T-cell (primary cell): ENCODE measurements at regions of chr17 and their contacts with region 1.

Region 1: DNA sequence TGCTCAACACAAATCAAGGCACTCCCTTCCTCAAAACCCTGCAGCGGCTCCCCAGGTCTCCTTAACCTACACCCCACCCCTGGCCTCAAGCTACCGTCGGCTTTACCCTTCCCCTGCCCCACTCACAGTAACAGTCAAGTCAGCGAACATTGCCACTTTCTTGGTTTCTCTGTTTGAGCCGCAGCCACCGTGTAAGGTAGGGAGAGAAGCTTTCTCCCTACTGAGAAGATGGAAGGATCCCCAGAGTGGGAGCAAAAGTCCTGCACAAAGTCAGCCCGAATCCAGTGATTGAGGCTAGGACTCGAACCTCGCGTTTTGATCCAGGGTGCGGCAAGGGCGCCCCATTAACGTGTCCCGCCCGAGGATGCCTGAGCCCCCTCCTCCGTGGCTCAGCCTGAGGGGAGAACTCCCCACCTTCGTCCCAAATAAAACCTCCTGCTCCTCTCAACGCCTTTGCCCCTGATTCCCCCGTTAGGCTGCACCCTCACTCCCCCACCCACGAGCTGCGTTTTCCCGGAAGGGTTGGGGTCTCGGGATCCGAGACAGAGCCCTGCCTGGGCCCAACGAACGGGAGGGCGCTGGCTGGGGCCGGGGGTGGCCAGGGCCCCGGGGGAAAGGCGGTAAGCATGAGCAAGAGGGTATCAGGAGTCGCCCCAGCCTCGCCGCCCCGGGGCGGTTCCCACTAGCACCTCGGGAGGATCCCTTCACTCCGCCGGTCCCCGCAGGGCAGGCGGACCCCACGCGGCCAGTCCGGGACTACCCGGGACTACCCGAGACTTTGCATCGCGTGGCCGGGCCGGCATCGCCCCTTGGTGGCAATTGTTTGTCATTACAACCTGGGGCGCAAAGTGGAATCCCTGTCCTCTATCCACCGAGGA is 9.9 kb upstream of the NAGS start:
- DNase-seq: peak; percentile 22 to 78 (median 55)
- ATAC-seq: peak; percentile 52 to 94 (median 89)
- H3K4me3 ChIP-seq: peak overlapping the region in 1 of 2 donors; percentile 26
- H3K4me3 Mint-ChIP-seq: peak overlapping the region in 1 of 3 donors; percentile 13
- H3K27ac ChIP-seq: no peak overlapping the region
- H3K27ac Mint-ChIP-seq: no peak overlapping the region
- H3K4me1 ChIP-seq: peaks cover 0 to 9% of the 10 kb centered on the region in 2 experiments
- H3K4me1 Mint-ChIP-seq: peaks cover 0 to 8% (median 0%) of the 10 kb centered on the region in 3 donors
- H3K27me3 ChIP-seq: peaks cover 0 to 48% of the 10 kb centered on the region in 2 experiments
- H3K27me3 Mint-ChIP-seq: peaks cover 7 to 19% of the 10 kb centered on the region in 2 donors

Region 2: GRCh38 chr17:43854453-43854852 is 140.1 kb before region 1 on chr17:
- CTCF ChIA-PET with region 1: no interaction called
- POLR2A ChIA-PET with region 1: no interaction called
- DNase-seq: no peak
- ATAC-seq: no peak
- H3K4me3 ChIP-seq: no peak overlapping the region
- H3K4me3 Mint-ChIP-seq: no peak overlapping the region
- H3K27ac ChIP-seq: no peak overlapping the region
- H3K27ac Mint-ChIP-seq: no peak overlapping the region
- H3K4me1 ChIP-seq: no peaks in the 10 kb centered on the region
- H3K4me1 Mint-ChIP-seq: no peaks in the 10 kb centered on the region
- H3K27me3 ChIP-seq: peaks cover 0 to 64% of the 10 kb centered on the region in 2 experiments
- H3K27me3 Mint-ChIP-seq: peaks cover 24 to 25% of the 10 kb centered on the region in 2 donors

Region 3: GRCh38 chr17:43952717-43953666 is 41.5 kb before region 1 on chr17:
- CTCF ChIA-PET with region 1: no interaction called
- POLR2A ChIA-PET with region 1: no interaction called
- DNase-seq: no peak
- ATAC-seq: peak in 1 of 4 experiments; percentile 34
- H3K4me3 ChIP-seq: no peak overlapping the region
- H3K4me3 Mint-ChIP-seq: no peak overlapping the region
- H3K27ac ChIP-seq: no peak overlapping the region
- H3K27ac Mint-ChIP-seq: no peak overlapping the region
- H3K4me1 ChIP-seq: peaks cover 0 to 12% of the 10 kb centered on the region in 2 experiments
- H3K4me1 Mint-ChIP-seq: peaks cover 2 to 4% (median 3%) of the 10 kb centered on the region in 3 donors
- H3K27me3 ChIP-seq: peaks cover 5 to 75% of the 10 kb centered on the region in 2 experiments
- H3K27me3 Mint-ChIP-seq: peaks cover 34 to 67% of the 10 kb centered on the region in 2 donors

Region 4: GRCh38 chr17:44006598-44007345 is 12.3 kb after region 1 on chr17:
- CTCF ChIA-PET with region 1: no interaction called
- POLR2A ChIA-PET with region 1: interaction called in 1 of 2 experiments, 13 read pairs
- DNase-seq: peak; percentile 82 to 98 (median 94)
- ATAC-seq: peak; percentile 84 to 93 (median 85)
- H3K4me3 ChIP-seq: peak overlapping the region; percentile 77 to 93
- H3K4me3 Mint-ChIP-seq: peak overlapping the region; percentile 81 to 90 (median 84)
- H3K27ac ChIP-seq: no peak overlapping the region
- H3K27ac Mint-ChIP-seq: peak overlapping the region; percentile 20 to 72
- H3K4me1 ChIP-seq: peaks cover 20 to 49% of the 10 kb centered on the region in 2 experiments
- H3K4me1 Mint-ChIP-seq: peaks cover 22 to 31% (median 27%) of the 10 kb centered on the region in 3 donors
- H3K27me3 ChIP-seq: peaks cover 0 to 50% of the 10 kb centered on the region in 2 experiments
- H3K27me3 Mint-ChIP-seq: peaks cover 0 to 4% of the 10 kb centered on the region in 2 donors

Region 5: DNA sequence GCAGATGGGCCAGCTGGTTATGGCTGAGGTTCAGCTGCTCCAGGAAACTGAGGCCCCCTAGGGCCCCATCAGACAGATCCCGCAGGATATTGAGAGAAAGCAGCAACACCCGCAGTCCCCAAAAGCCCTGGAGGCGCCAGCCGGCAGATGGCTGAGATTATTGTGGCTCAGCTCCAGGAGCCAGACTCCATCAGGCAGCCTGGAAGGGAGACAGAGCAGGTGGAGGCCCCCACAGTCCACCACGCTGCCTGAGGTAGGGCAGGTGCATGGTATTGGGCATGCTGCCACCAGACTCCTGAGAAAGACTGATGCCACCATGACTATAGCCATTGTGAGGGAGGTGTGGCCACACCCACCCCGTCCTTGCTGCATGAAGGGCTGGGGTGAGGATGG is 29.8 kb after region 1 on chr17:
- CTCF ChIA-PET with region 1: no interaction called
- POLR2A ChIA-PET with region 1: no interaction called
- DNase-seq: no peak
- ATAC-seq: no peak
- H3K4me3 ChIP-seq: no peak overlapping the region
- H3K4me3 Mint-ChIP-seq: no peak overlapping the region
- H3K27ac ChIP-seq: no peak overlapping the region
- H3K27ac Mint-ChIP-seq: no peak overlapping the region
- H3K4me1 ChIP-seq: no peaks in the 10 kb centered on the region
- H3K4me1 Mint-ChIP-seq: no peaks in the 10 kb centered on the region
- H3K27me3 ChIP-seq: no peaks in the 10 kb centered on the region
- H3K27me3 Mint-ChIP-seq: no peaks in the 10 kb centered on the region

Region 6: DNA sequence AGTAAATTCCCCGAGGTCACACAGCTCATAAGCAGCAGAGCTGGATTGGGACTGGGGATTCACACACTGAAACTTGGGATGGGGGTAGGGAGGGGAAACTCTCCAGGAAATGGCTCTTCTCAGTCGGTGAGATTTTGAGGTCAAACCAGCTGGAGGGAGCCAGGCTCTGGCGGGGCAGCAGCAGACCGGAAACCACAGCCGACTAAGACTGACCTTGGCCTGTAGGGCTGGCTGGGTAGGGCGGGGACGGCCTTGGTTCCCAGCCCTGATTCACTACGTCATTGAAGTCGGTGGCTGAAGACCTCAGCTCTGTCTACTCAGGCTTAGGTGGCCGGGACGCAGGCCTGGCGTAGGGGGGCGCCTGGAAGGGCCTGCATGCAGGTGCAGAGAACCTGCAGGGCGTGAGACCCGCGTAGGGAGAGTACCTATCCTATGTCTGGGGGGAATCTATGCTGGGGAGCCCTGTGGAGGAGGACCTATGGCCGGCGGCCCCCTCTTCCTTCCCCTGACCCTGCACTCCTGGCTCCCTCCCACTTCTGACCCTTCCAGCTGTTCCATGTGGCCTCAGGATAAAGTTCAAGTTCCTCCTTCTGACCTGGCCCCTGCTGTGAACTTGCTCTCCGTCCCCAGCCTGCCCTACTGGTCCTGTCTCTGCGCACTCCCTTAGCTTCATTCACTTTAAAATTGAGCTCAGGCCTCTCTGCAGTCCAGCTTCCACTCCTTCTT is 285.3 kb after region 1 on chr17:
- CTCF ChIA-PET with region 1: no interaction called
- POLR2A ChIA-PET with region 1: no interaction called
- DNase-seq: peak in 13 of 35 experiments; percentile 3 to 53 (median 16)
- ATAC-seq: peak in 2 of 4 experiments; percentile 18 to 23
- H3K4me3 ChIP-seq: no peak overlapping the region
- H3K4me3 Mint-ChIP-seq: no peak overlapping the region
- H3K27ac ChIP-seq: no peak overlapping the region
- H3K27ac Mint-ChIP-seq: peak overlapping the region in 1 of 2 donors; percentile 24
- H3K4me1 ChIP-seq: peaks cover 0 to 9% of the 10 kb centered on the region in 2 experiments
- H3K4me1 Mint-ChIP-seq: peaks cover 9 to 13% (median 12%) of the 10 kb centered on the region in 3 donors
- H3K27me3 ChIP-seq: peaks cover 0 to 31% of the 10 kb centered on the region in 2 experiments
- H3K27me3 Mint-ChIP-seq: peaks cover 0 to 4% of the 10 kb centered on the region in 2 donors